ENCODE measurements at regions of chr11 and their contacts with region 1.

Region 1: GRCh38 chr11:124758317-124759203 is 3.5 kb downstream of the ESAM start:
- DNase-seq: peak; percentile 85 to 94 (median 91)
- H3K4me3 ChIP-seq: peak overlapping the region in 5 of 7 experiments; percentile 31 to 87 (median 69)
- H3K27ac ChIP-seq: no peak overlapping the region
- H3K4me1 ChIP-seq: peaks cover 1 to 61% (median 57%) of the 10 kb centered on the region in 4 experiments
- H3K27me3 ChIP-seq: no peaks in the 10 kb centered on the region

Region 2: GRCh38 chr11:124662106-124662505 is 96.5 kb before region 1 on chr11:
- CTCF ChIA-PET with region 1: interaction called, 31 read pairs
- POLR2A ChIA-PET with region 1: no interaction called
- DNase-seq: no peak
- H3K4me3 ChIP-seq: no peak overlapping the region
- H3K27ac ChIP-seq: no peak overlapping the region
- H3K4me1 ChIP-seq: no peaks in the 10 kb centered on the region
- H3K27me3 ChIP-seq: no peaks in the 10 kb centered on the region

Region 3: GRCh38 chr11:124699547-124699946 is 59.0 kb before region 1 on chr11:
- CTCF ChIA-PET with region 1: no interaction called
- POLR2A ChIA-PET with region 1: no interaction called
- DNase-seq: no peak
- H3K4me3 ChIP-seq: no peak overlapping the region
- H3K27ac ChIP-seq: no peak overlapping the region
- H3K4me1 ChIP-seq: no peaks in the 10 kb centered on the region
- H3K27me3 ChIP-seq: no peaks in the 10 kb centered on the region

Region 4: DNA sequence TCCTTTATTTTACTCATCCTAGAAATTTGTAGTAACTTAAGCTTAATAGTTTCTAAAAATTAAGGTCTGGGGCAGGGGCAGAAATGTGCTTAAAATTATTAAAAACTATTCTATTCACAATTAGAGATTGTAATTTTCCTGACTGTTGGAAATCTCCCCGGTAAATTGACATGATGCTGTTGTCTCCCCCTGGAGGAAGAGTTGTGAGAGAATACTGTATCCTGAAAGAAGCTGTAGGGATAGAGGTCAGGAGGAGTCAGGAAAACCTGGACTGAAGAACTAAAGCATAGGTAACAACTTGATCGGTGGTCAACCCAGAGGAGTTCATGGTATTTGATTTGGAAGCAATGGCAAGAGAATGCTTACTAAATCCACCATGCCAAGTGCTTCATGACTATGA is 19.7 kb after region 1 on chr11:
- CTCF ChIA-PET with region 1: interaction called, 17 read pairs
- POLR2A ChIA-PET with region 1: interaction called, 3 read pairs
- DNase-seq: no peak
- H3K4me3 ChIP-seq: no peak overlapping the region
- H3K27ac ChIP-seq: no peak overlapping the region
- H3K4me1 ChIP-seq: peaks cover 0 to 5% (median 2%) of the 10 kb centered on the region in 4 experiments
- H3K27me3 ChIP-seq: peaks cover 0 to 2% (median 0%) of the 10 kb centered on the region in 5 experiments

Region 5: DNA sequence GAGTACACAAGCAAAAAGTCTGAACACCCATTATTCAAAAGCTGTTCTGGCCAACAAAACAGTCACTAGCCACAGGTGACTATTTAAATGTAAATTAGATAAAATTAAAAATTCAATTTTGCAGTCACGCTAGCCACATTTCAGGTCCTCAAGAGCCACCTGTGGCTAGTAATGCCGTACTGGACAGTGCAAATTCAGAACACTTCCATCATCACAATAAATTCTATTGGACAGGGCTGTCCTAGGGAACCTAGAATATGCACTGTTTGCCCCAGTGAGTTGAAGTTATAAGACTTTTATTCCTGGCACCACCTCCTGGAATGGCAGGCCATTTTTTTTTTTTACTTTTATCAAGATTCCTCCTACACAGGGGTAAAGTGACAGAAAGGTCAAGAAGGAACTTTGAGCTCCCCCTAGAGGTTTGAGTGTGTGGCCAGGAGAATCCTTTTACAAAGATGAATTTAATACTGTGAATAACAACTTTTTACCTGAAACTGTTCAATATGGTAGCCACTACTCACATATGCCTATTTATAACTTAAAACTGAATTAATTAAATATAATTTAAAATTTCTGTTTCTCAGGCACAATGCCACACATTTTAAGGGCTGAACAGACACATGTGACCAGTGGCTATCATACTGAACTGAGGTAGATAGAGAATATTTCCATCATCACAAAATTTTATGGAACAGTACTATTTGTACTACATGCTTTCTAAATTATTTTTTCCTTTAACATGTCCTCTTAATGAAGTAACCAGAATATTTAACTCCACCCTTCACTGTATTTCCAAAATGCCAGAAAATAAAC is 35.1 kb after region 1 on chr11:
- CTCF ChIA-PET with region 1: interaction called, 54 read pairs
- POLR2A ChIA-PET with region 1: no interaction called
- DNase-seq: peak; percentile 66 to 81 (median 76)
- H3K4me3 ChIP-seq: no peak overlapping the region
- H3K27ac ChIP-seq: no peak overlapping the region
- H3K4me1 ChIP-seq: peaks cover 0 to 3% (median 2%) of the 10 kb centered on the region in 4 experiments
- H3K27me3 ChIP-seq: peaks cover 0 to 8% (median 0%) of the 10 kb centered on the region in 5 experiments

Region 6: DNA sequence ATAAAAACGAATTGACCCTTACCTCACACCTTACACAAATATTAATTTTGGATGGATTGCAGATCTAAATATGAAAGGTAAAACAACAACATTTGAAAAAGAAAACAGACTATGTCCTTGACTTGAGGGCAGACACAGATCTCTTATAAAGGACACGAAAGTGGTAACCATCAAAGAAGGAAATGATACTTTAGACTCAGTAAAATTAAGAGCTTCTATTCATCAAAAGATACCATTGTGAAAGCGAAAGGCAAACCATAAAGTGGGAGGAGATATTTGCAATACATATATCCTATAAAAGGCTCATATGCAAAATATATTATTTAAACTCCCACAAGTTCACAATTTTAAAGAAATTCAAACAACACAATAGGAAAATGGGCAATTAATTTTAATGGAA is 172.2 kb after region 1 on chr11:
- CTCF ChIA-PET with region 1: no interaction called
- POLR2A ChIA-PET with region 1: no interaction called
- DNase-seq: no peak
- H3K4me3 ChIP-seq: no peak overlapping the region
- H3K27ac ChIP-seq: no peak overlapping the region
- H3K4me1 ChIP-seq: no peaks in the 10 kb centered on the region
- H3K27me3 ChIP-seq: peaks cover 0 to 6% (median 0%) of the 10 kb centered on the region in 5 experiments